Activated B cell treated with CpG ODN at 0.5 μM for 24 hours (primary cell): ENCODE measurements at regions of chr1 and their contacts with region 1.

Region 1: GRCh38 chr1:172109359-172109758 is 268.1 kb downstream of the DNM3 start:
- DNase-seq: no peak
- ATAC-seq: no peak
- H3K4me3 Mint-ChIP-seq: no peak overlapping the region
- H3K27ac Mint-ChIP-seq: no peak overlapping the region
- H3K4me1 Mint-ChIP-seq: no peaks in the 10 kb centered on the region
- H3K27me3 Mint-ChIP-seq: peaks cover 3% of the 10 kb centered on the region
- CTCF ChIP-seq: no peak

Region 2: DNA sequence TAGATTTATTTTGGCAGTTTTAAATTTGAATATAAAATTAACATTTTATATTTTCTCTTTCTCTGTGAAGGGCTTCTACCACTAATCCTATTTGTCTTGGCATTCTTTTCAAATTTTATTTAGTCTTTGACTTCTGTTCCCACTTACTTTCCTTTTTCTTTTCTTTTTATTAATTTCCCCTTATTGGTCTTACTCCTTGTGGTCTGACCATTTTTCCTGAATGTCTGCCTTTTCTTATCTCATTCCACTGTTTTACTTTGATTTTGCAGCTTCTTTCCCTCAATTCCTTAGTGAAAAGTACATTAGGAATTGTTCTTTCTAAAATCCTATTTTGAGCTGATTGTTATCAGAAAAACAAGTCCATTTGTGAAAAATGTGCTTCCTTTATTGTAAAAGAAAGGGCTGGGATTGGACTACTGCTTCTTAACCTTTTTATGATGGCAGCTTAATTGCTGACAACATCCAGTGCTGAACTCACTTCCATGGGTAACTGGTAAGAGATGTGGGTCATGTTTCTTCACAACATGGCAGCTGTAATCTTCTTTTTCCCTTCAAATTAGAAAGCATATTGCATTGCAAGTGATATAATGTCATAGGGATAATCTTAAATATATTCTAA is 16.6 kb after region 1 on chr1:
- CTCF ChIA-PET with region 1: interaction called, 5 read pairs
- POLR2A ChIA-PET with region 1: no interaction called
- intact Hi-C with region 1: loop called (anchors 2 kb)
- DNase-seq: no peak
- ATAC-seq: no peak
- H3K4me3 Mint-ChIP-seq: no peak overlapping the region
- H3K27ac Mint-ChIP-seq: no peak overlapping the region
- H3K4me1 Mint-ChIP-seq: peaks cover 4% of the 10 kb centered on the region
- H3K27me3 Mint-ChIP-seq: no peaks in the 10 kb centered on the region
- CTCF ChIP-seq: no peak